Vagina (tissue), 2 donors: ENCODE measurements at regions of chr11 and their contacts with region 1.

Region 1: GRCh38 chr11:47259178-47259977 is 1.6 kb downstream of the NR1H3 start:
- DNase-seq: no peak
- H3K4me3 ChIP-seq: no peak overlapping the region
- H3K27ac ChIP-seq: peak overlapping the region; percentile 85
- H3K4me1 ChIP-seq: peaks cover 63% of the 10 kb centered on the region
- H3K27me3 ChIP-seq: no peaks in the 10 kb centered on the region
- CTCF ChIP-seq: peak in 1 of 3 experiments; percentile 35
- POLR2A ChIP-seq: no peak

Region 2: DNA sequence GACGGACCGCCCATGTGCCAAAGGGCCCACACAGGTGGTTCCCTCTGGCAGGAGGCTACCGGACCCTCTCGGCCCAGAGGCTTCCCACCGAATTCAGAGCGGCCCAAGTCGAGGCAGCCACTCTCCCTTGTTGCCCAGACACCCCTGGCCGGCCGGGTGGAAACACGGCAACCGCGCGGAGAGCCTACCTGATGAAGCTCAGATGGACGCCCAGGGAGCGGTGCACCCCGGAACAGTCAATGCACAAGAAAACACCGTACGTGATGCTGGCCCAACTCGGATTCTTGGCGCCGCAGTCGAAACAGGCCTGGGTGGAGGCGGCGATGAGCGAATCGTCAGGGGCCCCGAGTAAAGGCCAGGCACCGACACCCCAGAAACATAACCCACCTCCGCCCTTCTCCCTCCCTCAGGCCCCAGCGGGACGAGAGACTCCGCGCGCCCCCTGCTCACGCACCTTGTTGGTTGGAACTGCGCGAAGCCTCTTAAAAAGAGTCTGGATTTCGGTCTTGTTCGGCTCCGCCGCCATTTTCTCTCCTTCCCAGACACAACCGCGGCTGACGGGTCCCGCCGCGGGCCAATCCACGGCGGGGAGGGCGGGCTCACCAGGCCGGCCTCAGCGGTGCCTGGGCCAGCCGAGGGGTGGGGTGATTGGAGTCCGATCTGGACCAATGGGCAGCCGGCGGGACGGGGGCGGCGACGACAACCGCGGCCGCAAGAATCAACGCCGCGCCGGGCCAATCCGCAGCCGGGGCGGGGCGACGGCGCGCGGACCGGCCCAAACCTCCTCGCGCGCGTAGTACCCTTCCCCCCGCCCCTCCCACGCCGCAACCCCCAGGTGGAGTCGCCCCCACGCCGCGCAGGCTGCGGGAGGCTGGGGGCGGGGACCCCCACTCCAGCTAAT is 82.8 kb before region 1 on chr11 and contains the start of gene ARFGAP2:
- intact Hi-C with region 1: loop called (anchors 5 kb)
- DNase-seq: peak in 1 of 2 donors; percentile 97
- H3K4me3 ChIP-seq: peak within 1 kb of the TSS; percentile 81 to 96
- H3K27ac ChIP-seq: peak within 1 kb of the TSS; percentile 98
- H3K4me1 ChIP-seq: peaks cover 53% of the 10 kb centered on the region
- H3K27me3 ChIP-seq: no peaks in the 10 kb centered on the region
- CTCF ChIP-seq: no peak
- POLR2A ChIP-seq: peak in 1 of 2 donors; percentile 18
- total RNA-seq, gene ARFGAP2: 79.3 TPM

Region 3: GRCh38 chr11:47213985-47214564 is 45.3 kb before region 1 on chr11:
- intact Hi-C with region 1: loop called (anchors 5 kb)
- DNase-seq: peak in 1 of 2 donors; percentile 96
- H3K4me3 ChIP-seq: peak overlapping the region; percentile 46 to 71
- H3K27ac ChIP-seq: peak overlapping the region; percentile 97
- H3K4me1 ChIP-seq: peaks cover 36% of the 10 kb centered on the region
- H3K27me3 ChIP-seq: no peaks in the 10 kb centered on the region
- CTCF ChIP-seq: no peak
- POLR2A ChIP-seq: peak in 1 of 2 donors; percentile 48